PC-3 (cell line): ENCODE measurements at regions of chr1 and their contacts with region 1.

Region 1: DNA sequence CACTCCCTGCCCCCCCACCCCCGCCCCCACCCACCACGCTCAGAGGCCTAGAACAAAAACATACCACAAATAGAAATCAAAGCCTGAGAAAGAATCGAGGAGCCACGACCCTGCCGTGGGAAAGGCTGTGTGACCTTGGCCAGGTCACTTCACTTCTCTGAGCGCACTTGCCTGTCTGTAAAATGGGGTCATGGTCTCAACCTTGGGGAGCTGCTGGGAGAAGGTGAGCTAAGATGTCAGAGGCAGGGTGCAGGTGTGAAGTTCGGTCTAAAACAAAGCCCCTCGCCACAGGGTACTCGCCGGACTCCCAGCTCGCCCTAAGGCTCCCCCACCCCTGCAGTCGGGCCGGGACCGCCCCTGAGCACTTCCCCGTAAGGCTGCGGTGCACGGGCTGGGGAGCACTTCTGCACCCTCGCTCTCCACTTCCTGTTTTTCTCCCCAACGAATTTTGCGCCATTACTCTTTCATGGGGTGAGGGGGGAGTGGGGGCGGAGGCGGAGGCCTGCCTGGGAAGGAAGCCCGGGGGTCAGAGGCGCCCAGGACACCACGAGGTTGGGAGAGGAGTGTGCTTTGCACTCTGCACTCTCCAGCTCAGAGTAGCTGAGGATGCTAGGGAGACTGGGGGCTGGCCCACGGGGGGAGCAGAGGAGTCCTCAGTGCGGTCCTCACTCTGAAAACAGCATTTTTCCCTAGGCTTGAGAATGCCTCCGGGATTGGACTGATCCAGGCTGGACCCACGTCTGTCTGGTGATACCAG is 21.9 kb upstream of the PIK3CD start:
- DNase-seq: no peak
- ATAC-seq: no peak
- H3K4me3 ChIP-seq: no peak overlapping the region
- H3K27ac ChIP-seq: no peak overlapping the region
- H3K4me1 ChIP-seq: no peaks in the 10 kb centered on the region; the same call in 1 of the 2 replicates
- H3K27me3 ChIP-seq: no peaks in the 10 kb centered on the region
- CTCF ChIP-seq: no peak

Region 2: DNA sequence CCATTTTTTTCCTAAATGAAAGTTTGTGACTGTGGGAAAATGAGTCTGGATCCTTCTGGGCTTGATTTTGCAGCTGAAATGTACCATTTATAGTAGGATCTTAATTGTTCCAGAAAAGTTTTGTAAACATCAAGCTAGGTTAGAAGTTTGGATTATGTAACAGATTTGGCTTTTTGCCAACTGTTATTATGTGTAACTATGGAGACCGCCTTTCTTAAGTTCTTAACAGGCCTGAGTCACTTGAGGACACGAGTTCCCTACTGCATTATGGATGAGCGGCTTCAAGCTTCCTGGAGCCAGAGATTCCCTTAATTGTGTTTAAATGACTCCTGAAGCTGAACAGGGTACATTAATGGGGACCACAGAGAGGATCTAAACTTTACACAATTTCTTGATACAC is 68.2 kb before region 1 on chr1:
- CTCF ChIA-PET with region 1: no interaction called
- POLR2A ChIA-PET with region 1: no interaction called
- intact Hi-C with region 1: no loop called
- DNase-seq: peak; percentile 80
- ATAC-seq: peak; percentile 91
- H3K4me3 ChIP-seq: no peak overlapping the region
- H3K27ac ChIP-seq: 0 out of 2 replicates have a peak overlapping the region, but pooled peaks have one; percentile 2
- H3K4me1 ChIP-seq: peaks cover 9% of the 10 kb centered on the region
- H3K27me3 ChIP-seq: no peaks in the 10 kb centered on the region
- CTCF ChIP-seq: no peak

Region 3: GRCh38 chr1:9671377-9672140 is 41.9 kb after region 1 on chr1:
- CTCF ChIA-PET with region 1: interaction called, 4 read pairs
- POLR2A ChIA-PET with region 1: no interaction called
- intact Hi-C with region 1: loop called (anchors 1 kb)
- DNase-seq: peak; percentile 93
- ATAC-seq: peak; percentile 98
- H3K4me3 ChIP-seq: no peak overlapping the region
- H3K27ac ChIP-seq: peak overlapping the region; percentile 80
- H3K4me1 ChIP-seq: peaks cover 23% of the 10 kb centered on the region
- H3K27me3 ChIP-seq: no peaks in the 10 kb centered on the region
- CTCF ChIP-seq: no peak

Region 4: GRCh38 chr1:9689011-9689706 is 59.5 kb after region 1 on chr1:
- CTCF ChIA-PET with region 1: interaction called, 3 read pairs
- POLR2A ChIA-PET with region 1: no interaction called
- intact Hi-C with region 1: loop called (anchors 5 kb)
- DNase-seq: peak; percentile 63
- ATAC-seq: peak; percentile 72
- H3K4me3 ChIP-seq: peak overlapping the region; percentile 95
- H3K27ac ChIP-seq: no peak overlapping the region
- H3K4me1 ChIP-seq: peaks cover 24% of the 10 kb centered on the region
- H3K27me3 ChIP-seq: no peaks in the 10 kb centered on the region
- CTCF ChIP-seq: no peak

Region 5: GRCh38 chr1:9700340-9700739 is 70.7 kb after region 1 on chr1:
- CTCF ChIA-PET with region 1: interaction called, 10 read pairs
- POLR2A ChIA-PET with region 1: no interaction called
- intact Hi-C with region 1: loop called (anchors 1 kb)
- DNase-seq: peak; percentile 93
- ATAC-seq: peak; percentile 95
- H3K4me3 ChIP-seq: peak overlapping the region; percentile 9; the same call in 1 of the 2 replicates
- H3K27ac ChIP-seq: peak overlapping the region; percentile 61
- H3K4me1 ChIP-seq: peaks cover 29% of the 10 kb centered on the region
- H3K27me3 ChIP-seq: no peaks in the 10 kb centered on the region
- CTCF ChIP-seq: no peak

Region 6: GRCh38 chr1:9717193-9718005 is 87.8 kb after region 1 on chr1:
- CTCF ChIA-PET with region 1: interaction called, 6 read pairs
- POLR2A ChIA-PET with region 1: no interaction called
- intact Hi-C with region 1: loop called (anchors 2 kb)
- DNase-seq: no peak
- ATAC-seq: no peak
- H3K4me3 ChIP-seq: no peak overlapping the region
- H3K27ac ChIP-seq: no peak overlapping the region
- H3K4me1 ChIP-seq: peaks cover 18% of the 10 kb centered on the region
- H3K27me3 ChIP-seq: no peaks in the 10 kb centered on the region
- CTCF ChIP-seq: no peak

Region 7: DNA sequence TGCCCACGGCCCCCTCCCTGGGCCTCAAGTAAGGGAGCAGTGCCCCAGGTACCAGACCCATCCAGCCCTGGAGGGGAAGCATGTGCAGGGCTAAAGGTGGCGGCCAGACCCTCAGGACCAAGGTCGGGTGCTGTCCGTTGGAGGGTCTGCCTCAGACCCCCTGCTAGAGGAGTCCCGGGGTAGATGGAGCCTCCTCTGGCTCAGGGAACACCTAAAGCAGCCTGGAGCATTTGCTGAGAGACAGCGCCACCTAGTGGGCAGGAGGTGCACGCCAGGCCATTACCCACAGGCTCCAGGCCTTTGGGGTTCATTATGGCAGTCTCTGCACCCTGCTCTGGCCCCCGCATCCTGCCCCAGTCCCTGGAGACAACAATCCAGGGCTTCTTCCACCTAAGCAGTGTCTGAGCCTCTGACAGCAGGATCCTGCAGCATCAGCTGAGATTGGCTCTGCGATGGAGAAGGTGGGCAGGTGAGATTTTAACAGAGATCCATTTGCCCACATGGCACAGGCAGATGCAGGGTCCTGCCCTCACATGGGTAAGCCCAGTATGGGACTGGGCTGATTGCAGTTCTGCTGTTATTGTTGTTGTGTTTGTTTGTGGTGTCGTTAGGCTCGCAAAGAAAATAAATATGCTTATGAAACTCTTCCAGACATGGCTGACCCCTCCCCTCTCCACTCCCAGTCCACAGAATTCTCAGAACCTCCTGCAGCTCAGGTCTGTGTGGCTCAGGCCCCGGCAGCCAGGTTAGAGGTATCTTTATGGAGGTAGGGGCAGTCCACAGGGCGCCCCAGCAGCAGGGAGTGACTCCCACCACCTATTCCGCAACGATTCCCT is 238.0 kb after region 1 on chr1:
- CTCF ChIA-PET with region 1: no interaction called
- POLR2A ChIA-PET with region 1: no interaction called
- intact Hi-C with region 1: loop called (anchors 2 kb)
- DNase-seq: peak; percentile 77
- ATAC-seq: peak; percentile 95
- H3K4me3 ChIP-seq: no peak overlapping the region
- H3K27ac ChIP-seq: no peak overlapping the region
- H3K4me1 ChIP-seq: peaks cover 5% of the 10 kb centered on the region
- H3K27me3 ChIP-seq: no peaks in the 10 kb centered on the region
- CTCF ChIP-seq: peak; percentile 95